ENCODE measurements at regions of chr11 and their contacts with region 1.

Region 1: GRCh38 chr11:44927174-44927661 is 23.5 kb downstream of the TP53I11 start:
- DNase-seq: peak; percentile 27
- ATAC-seq: peak; percentile 88
- H3K4me3 ChIP-seq: peak overlapping the region in 1 of 2 experiments; percentile 20; a peak in 2 of 4 replicates
- H3K27ac ChIP-seq: no peak overlapping the region
- H3K4me1 ChIP-seq: peaks cover 17% of the 10 kb centered on the region
- H3K27me3 ChIP-seq: no peaks in the 10 kb centered on the region
- CTCF ChIP-seq: peak; percentile 96

Region 2: DNA sequence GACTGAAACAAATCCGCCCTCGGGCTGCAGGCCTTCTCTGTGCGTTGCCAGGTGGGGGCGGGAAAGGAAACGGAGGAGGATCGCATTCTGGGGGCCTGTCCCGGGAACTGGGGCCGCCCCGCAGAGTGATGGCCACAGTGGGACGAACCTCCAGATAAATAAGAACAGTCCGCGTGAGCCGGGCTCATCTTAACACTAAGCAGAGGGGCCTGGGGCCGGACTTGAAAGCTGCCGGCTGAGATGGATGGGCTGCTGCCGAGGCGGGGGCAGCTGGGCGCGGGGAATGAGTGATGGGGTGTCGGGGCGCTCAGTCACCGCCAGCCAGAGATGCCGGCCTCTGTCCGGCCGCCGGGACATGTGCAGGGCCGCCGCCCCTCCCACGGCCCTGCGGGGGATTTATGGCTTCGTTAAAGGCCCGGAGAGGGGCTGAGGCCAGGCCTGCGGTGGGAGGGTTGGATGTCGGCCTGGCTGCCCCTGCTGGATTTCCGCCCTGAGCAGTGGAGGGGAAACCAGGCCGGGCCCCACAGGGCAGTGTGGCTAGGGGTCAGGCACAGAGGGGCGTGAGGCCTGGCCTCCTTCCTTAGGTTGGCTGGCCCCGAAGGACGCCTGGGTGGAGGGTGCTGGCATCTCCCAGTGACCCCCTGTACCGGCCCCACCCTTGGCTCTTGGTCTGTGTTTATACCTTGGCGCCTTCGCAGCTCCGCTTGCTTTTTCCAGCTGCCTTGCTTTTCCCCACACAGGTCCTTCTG is 407.1 kb before region 1 on chr11:
- CTCF ChIA-PET with region 1: no interaction called
- POLR2A ChIA-PET with region 1: no interaction called
- in situ Hi-C with region 1: no loop called
- intact Hi-C with region 1: no loop called
- DNase-seq: no peak
- ATAC-seq: no peak
- H3K4me3 ChIP-seq: no peak overlapping the region
- H3K27ac ChIP-seq: no peak overlapping the region
- H3K4me1 ChIP-seq: no peaks in the 10 kb centered on the region
- H3K27me3 ChIP-seq: no peaks in the 10 kb centered on the region
- CTCF ChIP-seq: no peak

Region 3: DNA sequence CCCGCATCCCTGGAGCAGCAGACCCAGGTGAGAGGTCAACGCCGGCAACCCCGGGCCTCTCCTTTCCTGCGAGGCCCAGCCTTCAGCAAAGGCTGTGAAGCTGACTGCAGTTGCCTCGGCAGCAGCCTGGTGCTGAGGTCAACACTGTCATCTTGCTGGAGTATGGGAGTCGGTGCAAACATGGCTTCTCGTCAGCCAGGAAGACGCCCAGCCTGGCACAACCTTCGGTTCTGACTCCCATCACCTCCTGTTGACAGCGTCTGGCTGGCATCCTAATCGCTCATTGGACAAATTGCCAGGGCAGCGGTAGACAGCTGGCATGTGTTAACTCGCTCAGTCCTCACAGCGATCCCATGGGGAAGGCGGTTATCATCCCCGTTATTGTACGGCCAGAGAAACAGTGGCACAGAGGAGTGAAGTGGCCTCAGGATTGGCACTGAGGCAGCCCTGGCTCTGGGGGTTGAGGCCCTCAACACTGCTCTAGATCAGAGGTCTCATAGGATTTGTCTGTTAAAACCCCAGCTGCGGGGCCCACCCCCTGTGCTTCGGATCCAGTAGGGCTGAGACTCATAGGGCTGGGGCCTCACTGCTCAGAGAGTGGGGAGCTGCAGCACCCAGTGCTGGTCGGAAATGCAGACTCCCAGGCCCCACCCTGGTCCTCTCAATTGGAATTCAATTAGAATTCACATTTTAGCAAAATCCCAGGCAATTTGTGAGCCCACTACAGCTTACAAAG is 62.8 kb after region 1 on chr11:
- CTCF ChIA-PET with region 1: no interaction called
- POLR2A ChIA-PET with region 1: no interaction called
- in situ Hi-C with region 1: no loop called
- intact Hi-C with region 1: no loop called
- DNase-seq: no peak
- ATAC-seq: no peak
- H3K4me3 ChIP-seq: no peak overlapping the region
- H3K27ac ChIP-seq: no peak overlapping the region
- H3K4me1 ChIP-seq: no peaks in the 10 kb centered on the region; the same call in 1 of the 2 replicates
- H3K27me3 ChIP-seq: no peaks in the 10 kb centered on the region
- CTCF ChIP-seq: no peak

Region 4: DNA sequence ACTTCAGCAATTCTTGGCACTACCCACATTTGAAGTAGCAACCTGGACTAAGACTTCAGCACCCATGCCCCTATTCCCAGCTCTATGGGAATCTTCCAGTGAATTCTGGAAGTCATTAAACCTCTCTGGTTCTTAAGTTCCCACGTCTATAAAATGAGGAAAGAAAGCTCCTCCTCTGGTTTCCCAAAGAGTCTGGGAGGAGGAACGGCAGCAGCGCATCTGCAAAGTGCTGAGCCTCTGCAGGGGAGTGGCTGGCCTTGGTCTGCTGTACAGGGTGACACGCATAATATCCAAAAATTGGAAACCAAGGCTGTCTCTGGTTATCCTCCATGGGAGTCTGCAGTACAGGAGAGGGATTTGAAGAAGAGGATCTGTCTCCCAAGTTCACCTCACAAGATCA is 97.1 kb after region 1 on chr11:
- CTCF ChIA-PET with region 1: interaction called, 10 read pairs
- POLR2A ChIA-PET with region 1: no interaction called
- in situ Hi-C with region 1: no loop called
- intact Hi-C with region 1: no loop called
- DNase-seq: no peak
- ATAC-seq: no peak
- H3K4me3 ChIP-seq: no peak overlapping the region
- H3K27ac ChIP-seq: no peak overlapping the region
- H3K4me1 ChIP-seq: no peaks in the 10 kb centered on the region
- H3K27me3 ChIP-seq: no peaks in the 10 kb centered on the region
- CTCF ChIP-seq: no peak